ENCODE measurements at regions of chr17 and their contacts with region 1.

Region 1: GRCh38 chr17:35747540-35748017 is 5.5 kb downstream of the GAS2L2 start:
- DNase-seq: peak; percentile 61 to 83 (median 75)
- ATAC-seq: peak; percentile 93
- H3K4me3 ChIP-seq: no peak overlapping the region
- H3K4me3 Mint-ChIP-seq: no peak overlapping the region
- H3K27ac ChIP-seq: no peak overlapping the region
- H3K27ac Mint-ChIP-seq: no peak overlapping the region
- H3K4me1 ChIP-seq: no peaks in the 10 kb centered on the region
- H3K4me1 Mint-ChIP-seq: peaks cover 0 to 21% (median 3%) of the 10 kb centered on the region in 7 donors
- H3K27me3 ChIP-seq: peaks cover 0 to 10% of the 10 kb centered on the region in 2 donors
- H3K27me3 Mint-ChIP-seq: peaks cover 35 to 50% (median 42%) of the 10 kb centered on the region in 5 donors

Region 2: GRCh38 chr17:34420254-34420766 is 1327.3 kb before region 1 on chr17:
- CTCF ChIA-PET with region 1: no interaction called
- POLR2A ChIA-PET with region 1: no interaction called
- intact Hi-C with region 1: loop called in 1 of 2 experiments (anchors 1 kb)
- DNase-seq: peak; percentile 20 to 68 (median 50)
- ATAC-seq: peak; percentile 67
- H3K4me3 ChIP-seq: no peak overlapping the region
- H3K4me3 Mint-ChIP-seq: no peak overlapping the region
- H3K27ac ChIP-seq: no peak overlapping the region
- H3K27ac Mint-ChIP-seq: peak overlapping the region in 1 of 9 donors; percentile 31
- H3K4me1 ChIP-seq: no peaks in the 10 kb centered on the region
- H3K4me1 Mint-ChIP-seq: peaks cover 0 to 8% (median 4%) of the 10 kb centered on the region in 7 donors
- H3K27me3 ChIP-seq: no peaks in the 10 kb centered on the region
- H3K27me3 Mint-ChIP-seq: peaks cover 19 to 58% (median 40%) of the 10 kb centered on the region in 5 donors

Region 3: GRCh38 chr17:35141681-35142466 is 605.7 kb before region 1 on chr17 and contains the start of gene NLE1:
- CTCF ChIA-PET with region 1: interaction called, 5 read pairs
- POLR2A ChIA-PET with region 1: interaction called, 3 read pairs
- intact Hi-C with region 1: loop called in 1 of 2 experiments (anchors 10 kb)
- DNase-seq: peak; percentile 79 to 94 (median 89)
- ATAC-seq: peak; percentile 100
- H3K4me3 ChIP-seq: peak within 1 kb of the TSS; percentile 79
- H3K4me3 Mint-ChIP-seq: peak within 1 kb of the TSS; percentile 77 to 88 (median 86)
- H3K27ac ChIP-seq: peak within 1 kb of the TSS; percentile 81
- H3K27ac Mint-ChIP-seq: peak within 1 kb of the TSS; percentile 66 to 90 (median 87)
- H3K4me1 ChIP-seq: peaks cover 6 to 13% of the 10 kb centered on the region in 2 donors
- H3K4me1 Mint-ChIP-seq: peaks cover 7 to 30% (median 21%) of the 10 kb centered on the region in 7 donors
- H3K27me3 ChIP-seq: no peaks in the 10 kb centered on the region
- H3K27me3 Mint-ChIP-seq: no peaks in the 10 kb centered on the region
- total RNA-seq, gene NLE1: 10.0 to 29.4 (median 21.8) TPM

Region 4: GRCh38 chr17:35555695-35556094 is 191.9 kb before region 1 on chr17:
- CTCF ChIA-PET with region 1: interaction called, 3 read pairs
- POLR2A ChIA-PET with region 1: no interaction called
- intact Hi-C with region 1: loop called in 1 of 2 experiments (anchors 1 kb)
- DNase-seq: no peak
- ATAC-seq: no peak
- H3K4me3 ChIP-seq: no peak overlapping the region
- H3K4me3 Mint-ChIP-seq: no peak overlapping the region
- H3K27ac ChIP-seq: no peak overlapping the region
- H3K27ac Mint-ChIP-seq: no peak overlapping the region
- H3K4me1 ChIP-seq: no peaks in the 10 kb centered on the region
- H3K4me1 Mint-ChIP-seq: peaks cover 0 to 4% (median 0%) of the 10 kb centered on the region in 7 donors
- H3K27me3 ChIP-seq: no peaks in the 10 kb centered on the region
- H3K27me3 Mint-ChIP-seq: peaks cover 0 to 36% (median 13%) of the 10 kb centered on the region in 5 donors

Region 5: GRCh38 chr17:35713069-35713728 is 34.4 kb before region 1 on chr17:
- CTCF ChIA-PET with region 1: no interaction called
- POLR2A ChIA-PET with region 1: no interaction called
- intact Hi-C with region 1: loop called in 1 of 2 experiments (anchors 1 kb)
- DNase-seq: no peak
- ATAC-seq: no peak
- H3K4me3 ChIP-seq: no peak overlapping the region
- H3K4me3 Mint-ChIP-seq: no peak overlapping the region
- H3K27ac ChIP-seq: no peak overlapping the region
- H3K27ac Mint-ChIP-seq: no peak overlapping the region
- H3K4me1 ChIP-seq: peaks cover 0 to 29% of the 10 kb centered on the region in 2 donors
- H3K4me1 Mint-ChIP-seq: peaks cover 6 to 38% (median 24%) of the 10 kb centered on the region in 7 donors
- H3K27me3 ChIP-seq: no peaks in the 10 kb centered on the region
- H3K27me3 Mint-ChIP-seq: no peaks in the 10 kb centered on the region